ENCODE measurements at regions of chr11 and their contacts with region 1.

Region 1: GRCh38 chr11:68297812-68298658 is 14.4 kb upstream of the LRP5 start:
- DNase-seq: peak; percentile 91
- CTCF ChIP-seq: peak; percentile 94

Region 2: GRCh38 chr11:68257475-68258362 is 40.3 kb before region 1 on chr11:
- in situ Hi-C with region 1: loop called (anchors 5 kb)
- DNase-seq: peak; percentile 90
- CTCF ChIP-seq: peak; percentile 76

Region 3: GRCh38 chr11:68773521-68774193 is 475.6 kb after region 1 on chr11:
- in situ Hi-C with region 1: no loop called
- DNase-seq: no peak
- CTCF ChIP-seq: no peak